ENCODE measurements at regions of chr7 and their contacts with region 1.

Region 1: GRCh38 chr7:121395961-121396757 is at the start of gene FAM3C:
- DNase-seq: peak; percentile 87
- ATAC-seq: peak; percentile 87
- H3K4me3 Mint-ChIP-seq: peak within 1 kb of the TSS; percentile 85
- H3K27ac Mint-ChIP-seq: peak within 1 kb of the TSS; percentile 89
- H3K4me1 Mint-ChIP-seq: peaks cover 47% of the 10 kb centered on the region
- H3K27me3 Mint-ChIP-seq: no peaks in the 10 kb centered on the region
- total RNA-seq, gene FAM3C: 50.3 to 96.0 TPM

Region 2: DNA sequence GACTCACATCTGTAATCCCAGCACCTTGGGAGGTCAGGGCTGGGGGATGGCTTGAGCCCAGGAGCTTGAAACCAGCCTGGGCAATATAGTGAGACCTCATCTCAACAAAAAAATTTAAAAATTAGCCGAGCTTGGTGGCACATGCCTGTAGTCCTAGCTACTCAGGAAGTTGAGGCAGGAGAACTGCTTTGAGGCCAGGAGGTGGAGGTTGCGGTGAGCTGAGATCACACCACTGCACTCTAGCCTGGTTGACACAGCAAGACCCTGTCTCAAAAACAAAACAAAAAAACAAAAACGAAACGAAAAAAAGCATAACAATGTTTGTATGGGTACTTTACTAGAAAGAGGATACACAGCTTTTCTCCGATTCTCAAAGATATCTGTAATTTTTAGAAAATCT is 35.6 kb before region 1 on chr7:
- CTCF ChIA-PET with region 1: interaction called, 15 read pairs
- DNase-seq: peak; percentile 81
- ATAC-seq: peak; percentile 85
- H3K4me3 Mint-ChIP-seq: no peak overlapping the region
- H3K27ac Mint-ChIP-seq: peak overlapping the region; percentile 73
- H3K4me1 Mint-ChIP-seq: peaks cover 23% of the 10 kb centered on the region
- H3K27me3 Mint-ChIP-seq: no peaks in the 10 kb centered on the region

Region 3: DNA sequence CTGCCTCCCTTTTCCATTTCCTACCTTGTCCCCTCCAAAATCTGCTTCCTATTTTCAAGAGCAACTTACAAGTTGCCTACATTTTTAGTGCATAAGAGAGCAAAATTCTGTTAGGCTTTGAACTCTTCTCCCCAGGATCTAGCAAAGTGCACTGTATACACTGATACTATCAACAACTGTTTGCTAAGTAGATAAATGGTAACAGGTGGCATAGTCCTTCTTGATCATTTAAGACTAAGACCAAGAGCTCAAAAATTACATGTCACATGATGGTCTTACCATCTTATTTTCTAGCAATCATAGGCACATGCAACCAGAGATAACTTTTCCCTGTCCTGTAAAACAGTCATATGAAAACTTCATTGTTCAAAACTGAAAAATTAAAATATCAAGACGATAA is 16.2 kb before region 1 on chr7:
- CTCF ChIA-PET with region 1: interaction called, 104 read pairs
- DNase-seq: no peak
- ATAC-seq: no peak
- H3K4me3 Mint-ChIP-seq: no peak overlapping the region
- H3K27ac Mint-ChIP-seq: peak overlapping the region; percentile 6
- H3K4me1 Mint-ChIP-seq: peaks cover 50% of the 10 kb centered on the region
- H3K27me3 Mint-ChIP-seq: no peaks in the 10 kb centered on the region

Region 4: DNA sequence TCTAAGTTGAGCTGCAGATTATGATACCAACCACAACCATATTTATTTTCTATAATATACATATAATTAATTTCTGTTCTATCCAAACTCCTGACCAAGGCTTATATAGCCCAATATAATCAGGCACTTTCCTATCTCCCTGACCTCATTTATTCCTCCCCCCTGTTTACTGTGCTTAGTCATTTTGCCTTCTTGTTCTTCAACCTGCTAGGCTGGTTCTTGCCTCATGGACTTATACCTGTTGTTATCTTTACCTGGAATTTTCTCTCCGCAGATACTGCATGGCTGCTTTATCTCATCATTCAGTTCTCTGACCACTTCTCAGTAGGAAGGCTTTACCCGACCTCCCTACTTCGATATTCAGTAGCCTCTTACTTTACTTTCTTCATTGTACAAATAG is 24.8 kb after region 1 on chr7:
- CTCF ChIA-PET with region 1: interaction called, 11 read pairs
- DNase-seq: no peak
- ATAC-seq: no peak
- H3K4me3 Mint-ChIP-seq: no peak overlapping the region
- H3K27ac Mint-ChIP-seq: no peak overlapping the region
- H3K4me1 Mint-ChIP-seq: no peaks in the 10 kb centered on the region
- H3K27me3 Mint-ChIP-seq: no peaks in the 10 kb centered on the region

Region 5: DNA sequence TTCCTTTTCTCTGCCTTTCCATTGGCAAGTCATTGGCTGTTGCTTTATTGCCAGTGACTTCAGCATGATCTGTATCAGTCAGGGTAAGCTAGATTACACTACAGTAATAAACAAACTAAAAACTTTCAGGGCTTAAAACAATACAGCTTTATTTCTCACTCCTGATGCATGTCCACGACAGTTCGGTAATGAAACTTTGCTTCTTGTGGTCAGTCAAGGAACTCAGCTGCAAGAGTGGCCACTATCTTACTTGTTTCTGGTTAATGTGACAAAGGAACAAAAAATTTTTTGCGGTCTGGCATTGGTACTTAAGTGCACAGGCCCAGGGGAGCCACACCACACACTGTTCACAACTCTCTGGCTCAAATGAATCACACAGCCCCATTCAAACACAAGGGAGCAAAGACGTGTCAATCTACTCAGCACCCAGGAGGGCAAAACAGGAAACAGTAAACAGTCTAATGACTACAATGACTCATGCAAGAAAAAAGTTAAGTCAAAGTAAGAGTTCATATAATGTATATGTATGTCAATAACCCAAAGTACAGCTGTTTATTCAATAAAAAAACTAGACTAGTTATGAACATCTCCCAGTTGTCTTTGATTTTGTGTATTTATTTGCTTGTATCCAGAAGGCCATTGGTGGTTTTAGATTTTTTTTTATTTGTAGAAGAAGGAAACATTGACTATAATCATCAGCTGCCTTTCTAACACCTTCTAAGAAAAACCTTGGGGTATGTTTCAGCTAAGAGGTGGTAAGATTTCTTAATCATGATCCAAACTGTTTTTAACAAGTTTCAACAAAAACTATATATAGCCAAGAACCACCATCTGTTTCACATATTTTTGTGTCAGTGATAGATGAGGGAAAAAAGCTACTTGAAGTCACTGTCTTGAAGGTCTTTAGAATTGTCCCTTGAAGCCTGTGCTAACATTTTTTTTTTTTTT is 134.3 kb after region 1 on chr7:
- CTCF ChIA-PET with region 1: interaction called, 28 read pairs
- DNase-seq: peak; percentile 92
- ATAC-seq: peak; percentile 99
- H3K4me3 Mint-ChIP-seq: peak overlapping the region; percentile 36
- H3K27ac Mint-ChIP-seq: peak overlapping the region; percentile 90
- H3K4me1 Mint-ChIP-seq: peaks cover 52% of the 10 kb centered on the region
- H3K27me3 Mint-ChIP-seq: no peaks in the 10 kb centered on the region